ENCODE measurements at regions of chr10 and their contacts with region 1.

Region 1: GRCh38 chr10:102283488-102283887 is 38.2 kb downstream of the GBF1 start:
- DNase-seq: peak; percentile 33
- H3K4me3 Mint-ChIP-seq: no peak overlapping the region
- H3K27ac Mint-ChIP-seq: peak overlapping the region; percentile 80
- H3K4me1 Mint-ChIP-seq: peaks cover 75% of the 10 kb centered on the region
- H3K27me3 Mint-ChIP-seq: no peaks in the 10 kb centered on the region

Region 2: DNA sequence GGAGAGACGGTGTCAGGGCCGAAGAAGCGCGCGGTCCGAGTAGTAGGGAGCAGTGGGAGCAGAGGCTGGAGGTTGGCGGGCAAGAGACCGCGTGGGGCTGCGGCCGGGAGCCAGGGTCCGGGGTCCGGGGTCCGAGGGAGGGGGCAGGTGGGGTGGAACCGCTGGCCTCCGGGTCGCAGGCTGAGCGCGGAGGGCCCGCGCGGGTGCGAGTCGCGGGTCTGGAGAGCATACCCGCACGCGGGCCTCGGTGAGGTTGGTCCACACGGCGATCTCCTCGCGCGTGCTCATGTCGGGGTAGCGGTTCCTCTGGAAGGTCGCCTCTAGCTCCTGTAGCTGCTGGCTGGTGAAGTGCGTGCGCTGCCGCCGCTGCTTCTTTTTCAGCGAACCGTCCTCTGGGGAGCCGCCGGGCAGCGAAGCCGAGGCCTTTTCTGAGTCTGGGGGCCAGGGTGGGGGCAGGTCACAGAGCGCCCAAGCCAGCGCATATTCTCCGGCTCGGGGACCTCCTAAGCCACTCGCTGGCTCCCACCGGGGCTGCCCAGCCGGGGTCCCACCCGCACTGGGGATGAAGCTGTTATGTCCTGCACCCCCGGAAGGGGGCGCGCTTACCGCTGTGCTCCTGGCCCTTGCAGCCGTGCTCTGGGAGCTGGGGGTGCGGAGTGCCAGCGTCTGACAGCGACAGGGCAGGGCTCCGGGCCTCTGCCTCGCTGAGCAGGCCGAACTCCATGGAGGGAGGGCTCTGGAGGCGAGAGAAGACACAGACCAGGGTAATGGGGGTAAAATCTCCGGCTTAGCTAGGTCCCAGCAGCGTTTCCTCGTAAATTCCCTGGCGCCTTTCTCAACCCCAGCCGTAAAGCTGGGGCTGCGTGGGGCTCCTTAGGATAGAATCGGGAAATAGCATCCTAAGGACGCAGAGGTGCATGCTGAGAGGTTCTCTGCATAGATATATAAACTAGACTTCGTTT is 51.9 kb before region 1 on chr10:
- CTCF ChIA-PET with region 1: interaction called, 10 read pairs
- intact Hi-C with region 1: no loop called
- DNase-seq: peak; percentile 78
- H3K4me3 Mint-ChIP-seq: peak overlapping the region; percentile 60
- H3K27ac Mint-ChIP-seq: no peak overlapping the region
- H3K4me1 Mint-ChIP-seq: peaks cover 4% of the 10 kb centered on the region
- H3K27me3 Mint-ChIP-seq: peaks cover 52% of the 10 kb centered on the region

Region 3: GRCh38 chr10:102268375-102268888 is 15.1 kb before region 1 on chr10:
- CTCF ChIA-PET with region 1: interaction called, 7 read pairs
- intact Hi-C with region 1: loop called (anchors 1 kb)
- DNase-seq: no peak
- H3K4me3 Mint-ChIP-seq: no peak overlapping the region
- H3K27ac Mint-ChIP-seq: peak overlapping the region; percentile 87
- H3K4me1 Mint-ChIP-seq: peaks cover 65% of the 10 kb centered on the region
- H3K27me3 Mint-ChIP-seq: no peaks in the 10 kb centered on the region

Region 4: DNA sequence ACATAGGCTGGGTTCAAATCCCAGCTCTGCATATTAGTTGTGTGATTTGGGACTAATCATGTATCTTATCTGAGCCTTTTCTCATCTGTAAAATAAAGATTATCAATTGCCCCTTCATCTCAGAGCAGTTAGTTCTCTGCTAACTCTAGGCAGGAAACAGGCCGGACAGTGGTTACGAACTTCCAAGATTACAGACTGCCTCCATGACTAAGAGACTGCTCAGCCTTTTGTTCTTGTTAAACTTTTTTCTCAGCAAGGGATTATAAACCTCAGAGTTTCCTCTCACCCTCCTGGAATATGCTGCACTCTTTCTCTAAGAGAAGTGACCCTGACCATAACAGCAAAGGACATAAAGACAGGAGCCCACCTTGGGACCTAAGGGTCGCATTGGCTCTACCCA is 59.5 kb after region 1 on chr10:
- CTCF ChIA-PET with region 1: no interaction called
- intact Hi-C with region 1: loop called (anchors 1 kb)
- DNase-seq: no peak
- H3K4me3 Mint-ChIP-seq: no peak overlapping the region
- H3K27ac Mint-ChIP-seq: no peak overlapping the region
- H3K4me1 Mint-ChIP-seq: peaks cover 31% of the 10 kb centered on the region
- H3K27me3 Mint-ChIP-seq: no peaks in the 10 kb centered on the region